ENCODE measurements at regions of chr12 and their contacts with region 1.

Region 1: DNA sequence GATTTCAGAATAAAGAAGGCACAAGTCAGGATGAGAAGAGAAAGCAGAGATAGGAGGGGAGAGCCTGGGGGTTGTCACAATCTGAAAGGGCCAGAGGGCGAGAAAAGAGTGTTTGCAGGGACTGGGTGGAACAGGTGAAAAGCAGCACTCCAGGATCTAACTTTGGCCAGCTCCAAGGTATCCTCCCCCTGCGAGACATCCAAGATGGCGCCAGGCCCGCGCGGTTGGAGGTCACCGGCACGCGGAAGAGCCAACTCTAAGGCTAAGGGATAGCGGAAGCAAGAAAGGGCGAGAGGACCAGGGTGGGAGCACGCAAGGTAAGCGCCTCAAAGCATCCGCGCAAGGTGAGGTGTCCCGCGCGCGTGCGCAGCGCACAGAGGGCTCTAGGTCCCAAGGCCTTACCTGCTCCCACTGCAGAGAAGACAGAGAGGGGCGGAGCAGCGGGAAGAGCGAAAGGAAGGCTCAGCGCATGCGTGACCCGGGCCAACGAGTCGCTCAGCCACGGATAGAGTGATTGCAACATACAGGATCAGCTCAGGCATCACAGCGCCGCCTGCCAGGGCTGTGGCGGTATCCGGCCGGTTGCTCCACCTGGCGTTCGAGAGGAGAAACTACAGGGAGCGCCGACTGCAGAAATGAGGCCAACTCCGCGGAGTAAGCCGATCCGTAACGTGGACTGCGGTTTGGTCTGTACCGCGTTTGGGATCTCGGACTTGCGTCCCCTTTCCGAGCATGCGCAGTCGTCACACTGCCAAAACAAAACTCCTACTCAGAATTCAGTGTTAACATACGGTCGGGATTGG is at the start of gene ATP5MC2:
- DNase-seq: peak; percentile 96 to 99
- H3K4me3 ChIP-seq: peak within 1 kb of the TSS; percentile 63 to 93 (median 87)
- H3K27ac ChIP-seq: peak within 1 kb of the TSS; percentile 98
- H3K4me1 ChIP-seq: peaks cover 2 to 16% (median 7%) of the 10 kb centered on the region in 4 experiments; a peak in 6 of 7 replicates
- H3K27me3 ChIP-seq: no peaks in the 10 kb centered on the region
- CTCF ChIP-seq: peak; percentile 100
- EP300 ChIP-seq: peak; percentile 5 to 42; a peak in 2 of 3 replicates
- POLR2A ChIP-seq: peak; percentile 74 to 96
- RAD21 ChIP-seq: peak; percentile 66 to 84
- total RNA-seq, gene ATP5MC2: 401 and 408 TPM in 2 replicates

Region 2: GRCh38 chr12:53500776-53501614 is 174.9 kb before region 1 on chr12 and contains the start of gene TARBP2:
- CTCF ChIA-PET with region 1: interaction called, 3 read pairs
- POLR2A ChIA-PET with region 1: interaction called, 17 read pairs
- DNase-seq: peak; percentile 95 to 97
- H3K4me3 ChIP-seq: peak within 1 kb of the TSS; percentile 55 to 91 (median 77)
- H3K27ac ChIP-seq: peak within 1 kb of the TSS; percentile 91
- H3K4me1 ChIP-seq: peaks cover 9 to 41% (median 20%) of the 10 kb centered on the region in 4 experiments
- H3K27me3 ChIP-seq: no peaks in the 10 kb centered on the region
- CTCF ChIP-seq: no peak
- EP300 ChIP-seq: 0 out of 3 replicates have a peak, but pooled peaks of 1 of the 2 experiments have one; percentile 12
- POLR2A ChIP-seq: peak; percentile 66 to 86
- RAD21 ChIP-seq: no peak
- total RNA-seq, gene TARBP2: 66.1 and 69.9 TPM in 2 replicates

Region 3: DNA sequence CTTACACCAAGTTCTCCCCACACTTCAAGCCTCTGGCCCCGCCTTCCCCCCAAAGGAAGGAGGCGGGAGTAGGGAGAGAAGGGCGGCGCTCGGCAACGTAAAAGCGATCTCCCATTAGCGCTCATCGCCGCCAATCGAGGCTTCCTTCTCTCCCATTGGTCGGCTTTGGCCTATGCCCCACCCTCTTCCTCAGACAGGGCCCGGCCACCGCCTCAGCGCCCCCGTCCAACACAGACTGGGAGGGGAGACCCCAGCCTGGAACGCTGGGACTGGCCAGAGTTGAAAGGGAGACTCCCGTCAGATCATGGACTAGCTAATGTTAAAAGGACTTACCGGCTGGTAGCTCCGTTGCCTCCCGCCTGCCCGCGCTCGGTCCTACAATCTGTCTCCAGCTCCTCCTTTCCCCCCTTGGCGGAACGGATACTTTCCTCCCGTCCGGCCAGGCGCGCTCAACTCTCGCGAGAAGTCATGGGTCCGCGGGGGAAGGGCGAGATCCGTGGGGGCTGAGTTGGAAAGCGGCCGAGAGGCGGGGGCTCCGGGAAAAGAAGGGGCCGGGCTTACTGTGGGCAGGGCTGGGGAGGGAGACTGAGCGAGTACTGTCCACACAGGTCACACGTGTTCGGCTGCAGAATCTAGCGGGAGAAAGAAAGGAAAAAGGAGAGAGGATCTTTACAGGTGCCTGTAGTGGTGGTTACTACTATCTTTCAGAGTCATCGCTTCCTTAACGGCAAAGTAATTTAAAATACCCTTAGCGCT is 49.7 kb before region 1 on chr12 and contains the start of gene ATF7:
- CTCF ChIA-PET with region 1: interaction called, 4 read pairs
- POLR2A ChIA-PET with region 1: interaction called, 53 read pairs
- DNase-seq: peak; percentile 97 to 99
- H3K4me3 ChIP-seq: peak within 1 kb of the TSS; percentile 70 to 94 (median 80)
- H3K27ac ChIP-seq: peak within 1 kb of the TSS; percentile 98
- H3K4me1 ChIP-seq: peaks cover 0 to 7% (median 3%) of the 10 kb centered on the region in 4 experiments; a peak in 4 of 7 replicates
- H3K27me3 ChIP-seq: no peaks in the 10 kb centered on the region
- CTCF ChIP-seq: no peak
- EP300 ChIP-seq: peak in 1 of 2 experiments; percentile 96; a peak in 2 of 3 replicates
- POLR2A ChIP-seq: peak; percentile 78 to 87
- RAD21 ChIP-seq: 0 out of 4 replicates have a peak, but pooled peaks of 1 of the 2 experiments have one; percentile 1
- total RNA-seq, gene ATF7: 16.6 and 18.4 TPM in 2 replicates

Region 4: DNA sequence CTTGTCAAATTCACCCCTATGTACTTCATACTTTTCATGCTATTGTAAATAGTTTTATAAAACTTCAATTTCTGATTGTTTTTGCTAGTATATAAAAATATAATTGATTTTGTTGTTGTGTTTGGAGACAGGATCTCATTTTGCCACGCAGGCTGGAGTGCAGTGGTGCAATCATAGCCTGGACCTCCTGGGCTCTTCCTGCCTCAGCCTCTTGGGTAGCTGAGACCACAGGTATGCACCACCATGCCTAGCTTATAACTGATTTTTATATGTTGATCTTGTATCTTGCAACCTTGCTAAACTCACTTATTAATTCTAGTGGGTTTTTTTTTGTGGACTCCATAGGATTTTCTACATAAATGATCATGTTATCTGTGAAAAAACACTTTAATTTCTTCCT is 23.5 kb before region 1 on chr12:
- CTCF ChIA-PET with region 1: interaction called, 3 read pairs
- POLR2A ChIA-PET with region 1: interaction called, 246 read pairs
- DNase-seq: no peak
- H3K4me3 ChIP-seq: no peak overlapping the region
- H3K27ac ChIP-seq: no peak overlapping the region
- H3K4me1 ChIP-seq: no peaks in the 10 kb centered on the region
- H3K27me3 ChIP-seq: no peaks in the 10 kb centered on the region
- CTCF ChIP-seq: no peak
- EP300 ChIP-seq: no peak
- POLR2A ChIP-seq: no peak
- RAD21 ChIP-seq: no peak

Region 5: DNA sequence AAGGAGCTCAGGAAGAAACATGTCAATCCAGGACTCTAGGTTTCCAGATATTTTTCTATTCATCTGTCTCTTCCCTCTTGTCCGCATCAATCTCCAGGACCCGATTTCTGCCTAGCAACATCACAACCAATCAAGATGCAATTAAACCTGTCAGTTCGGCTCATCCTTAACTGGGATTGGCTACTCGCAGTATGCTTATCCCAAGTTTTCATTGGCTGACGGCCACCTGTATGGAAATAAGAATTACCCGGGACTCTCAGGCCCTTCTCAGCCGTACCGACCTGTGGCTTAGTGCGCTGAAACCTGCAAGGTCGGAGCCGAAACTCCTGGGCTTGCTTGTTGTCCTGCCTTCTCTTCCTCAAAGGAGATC is 20.4 kb after region 1 on chr12:
- CTCF ChIA-PET with region 1: interaction called, 10 read pairs
- POLR2A ChIA-PET with region 1: interaction called, 109 read pairs
- DNase-seq: peak; percentile 64 to 75
- H3K4me3 ChIP-seq: peak overlapping the region; percentile 30 to 57 (median 38); a peak in 7 of 8 replicates
- H3K27ac ChIP-seq: no peak overlapping the region
- H3K4me1 ChIP-seq: peaks cover 3 to 17% (median 9%) of the 10 kb centered on the region in 4 experiments
- H3K27me3 ChIP-seq: peaks cover 8 to 40% (median 35%) of the 10 kb centered on the region in 4 experiments
- CTCF ChIP-seq: no peak
- EP300 ChIP-seq: no peak
- POLR2A ChIP-seq: peak in 1 of 2 experiments; percentile 73; a peak in 2 of 3 replicates
- RAD21 ChIP-seq: no peak

Region 6: DNA sequence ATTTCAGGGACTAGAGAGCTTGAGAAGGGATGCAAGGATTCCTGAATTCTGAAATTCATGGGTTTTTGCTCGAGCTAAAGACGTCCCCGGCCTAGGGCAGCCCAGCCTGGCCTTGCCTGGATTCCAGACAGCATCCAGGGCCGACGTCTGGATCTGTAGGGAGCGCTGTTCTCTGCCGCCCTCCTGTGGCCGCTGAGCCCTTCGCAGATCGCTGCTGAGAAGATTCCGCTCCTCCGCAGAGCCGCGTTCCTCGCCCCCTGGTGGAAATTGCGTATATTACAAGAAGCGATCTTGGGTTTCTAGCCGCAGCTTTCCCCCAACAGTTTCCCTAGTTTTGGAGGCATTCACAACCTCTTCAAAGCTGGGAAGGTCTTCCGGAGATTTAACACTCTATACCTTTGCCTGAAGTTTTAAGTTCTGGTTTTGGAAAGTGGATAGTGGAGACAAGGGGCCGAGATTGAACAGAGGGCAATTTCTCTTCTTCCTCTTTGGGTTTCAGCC is 70.8 kb after region 1 on chr12:
- CTCF ChIA-PET with region 1: interaction called, 10 read pairs
- POLR2A ChIA-PET with region 1: interaction called, 10 read pairs
- DNase-seq: peak; percentile 77 to 96
- H3K4me3 ChIP-seq: no peak overlapping the region
- H3K27ac ChIP-seq: no peak overlapping the region
- H3K4me1 ChIP-seq: peaks cover 0 to 24% (median 6%) of the 10 kb centered on the region in 4 experiments; a peak in 5 of 7 replicates
- H3K27me3 ChIP-seq: peaks cover 43 to 77% (median 57%) of the 10 kb centered on the region in 4 experiments
- CTCF ChIP-seq: peak; percentile 99 to 100 (median 100)
- EP300 ChIP-seq: peak in 1 of 2 experiments; percentile 50; a peak in 1 of 3 replicates
- POLR2A ChIP-seq: no peak
- RAD21 ChIP-seq: peak; percentile 89 to 96

Region 7: GRCh38 chr12:53830621-53831020 is 154.8 kb after region 1 on chr12:
- CTCF ChIA-PET with region 1: no interaction called
- POLR2A ChIA-PET with region 1: no interaction called
- DNase-seq: no peak
- H3K4me3 ChIP-seq: no peak overlapping the region
- H3K27ac ChIP-seq: no peak overlapping the region
- H3K4me1 ChIP-seq: no peaks in the 10 kb centered on the region; a peak in 1 of 7 replicates
- H3K27me3 ChIP-seq: no peaks in the 10 kb centered on the region
- CTCF ChIP-seq: no peak
- EP300 ChIP-seq: no peak
- POLR2A ChIP-seq: no peak
- RAD21 ChIP-seq: no peak

Region 8: GRCh38 chr12:53862831-53863230 is 187.0 kb after region 1 on chr12:
- CTCF ChIA-PET with region 1: no interaction called
- POLR2A ChIA-PET with region 1: no interaction called
- DNase-seq: no peak
- H3K4me3 ChIP-seq: no peak overlapping the region
- H3K27ac ChIP-seq: no peak overlapping the region
- H3K4me1 ChIP-seq: no peaks in the 10 kb centered on the region
- H3K27me3 ChIP-seq: no peaks in the 10 kb centered on the region; a peak in 1 of 7 replicates
- CTCF ChIP-seq: no peak
- EP300 ChIP-seq: no peak
- POLR2A ChIP-seq: no peak
- RAD21 ChIP-seq: no peak